Gastrocnemius medialis (tissue), 4 donors: ENCODE measurements at regions of chr20 and their contacts with region 1.

Region 1: DNA sequence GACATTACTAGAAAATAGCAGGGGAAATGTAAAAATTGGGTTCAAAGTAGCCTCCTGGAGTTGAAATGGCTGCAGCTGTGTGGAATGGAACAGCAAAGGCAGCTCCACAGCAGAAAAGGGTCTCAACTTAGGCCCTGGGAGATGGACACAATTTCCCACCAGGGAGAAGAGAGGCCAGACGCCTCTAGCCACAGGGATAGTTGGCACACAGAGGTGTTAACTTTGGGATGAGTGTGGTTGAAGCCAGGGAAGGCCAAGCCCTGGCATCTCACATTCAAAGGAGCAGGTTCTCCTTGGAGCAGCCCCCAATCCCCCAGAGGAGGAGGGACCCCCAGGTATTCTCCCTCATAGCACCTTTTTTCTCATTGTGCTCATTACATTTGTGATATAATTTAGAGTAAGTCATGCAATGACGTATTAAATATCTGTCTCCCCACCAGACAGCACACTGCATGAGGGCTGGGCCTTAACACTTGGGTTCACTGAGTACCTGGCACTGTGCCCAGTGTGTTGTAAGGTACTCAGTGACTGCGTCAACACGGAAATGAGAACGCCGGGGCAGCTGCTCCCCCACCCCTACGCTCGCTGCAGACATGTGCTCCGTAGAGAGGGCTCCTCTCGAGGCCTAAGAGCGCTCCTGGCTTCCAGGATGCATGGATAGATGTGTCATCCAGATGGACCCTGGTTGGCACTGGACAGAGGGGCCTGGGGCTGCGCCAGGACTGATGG is 76.0 kb upstream of the CD93 start:
- DNase-seq: peak; percentile 92 to 97
- ATAC-seq: peak; percentile 90 to 94
- H3K4me3 ChIP-seq: no peak overlapping the region
- H3K27ac ChIP-seq: peak overlapping the region; percentile 77 to 83 (median 78)
- H3K4me1 ChIP-seq: peaks cover 44 to 56% of the 10 kb centered on the region in 2 donors
- H3K27me3 ChIP-seq: no peaks in the 10 kb centered on the region
- CTCF ChIP-seq: no peak
- POLR2A ChIP-seq: peak in 1 of 2 donors; percentile 21

Region 2: DNA sequence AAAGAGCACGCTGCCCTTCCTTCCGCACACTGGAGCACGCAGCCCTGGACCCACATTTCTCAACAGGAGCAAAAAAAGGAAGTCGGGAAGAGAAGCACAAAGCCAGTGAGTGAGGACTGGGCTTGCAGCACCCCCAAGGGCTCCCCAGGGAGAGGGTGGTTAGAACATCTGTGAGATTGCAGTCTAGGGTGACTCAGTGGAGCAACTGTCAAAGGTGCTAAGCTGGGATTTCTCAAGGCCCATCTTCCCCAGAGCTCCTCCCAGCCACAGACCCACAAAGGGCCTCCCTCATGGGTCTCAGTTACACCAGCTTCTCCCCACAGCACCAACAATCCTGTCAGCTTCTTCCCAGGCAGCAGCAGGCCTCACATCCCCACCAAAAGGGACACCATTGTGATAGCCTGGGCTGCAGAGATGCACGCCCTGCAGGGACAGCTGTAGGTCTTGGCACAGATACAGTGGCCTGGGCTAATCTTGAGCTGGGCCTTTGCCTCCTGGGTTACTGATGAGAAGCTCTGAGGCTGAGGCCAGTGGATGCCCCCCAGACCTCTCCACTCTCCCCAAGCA is 36.4 kb before region 1 on chr20:
- in situ Hi-C with region 1: no loop called
- intact Hi-C with region 1: loop called (anchors 1 kb)
- DNase-seq: peak; percentile 61 to 80
- ATAC-seq: peak; percentile 71
- H3K4me3 ChIP-seq: no peak overlapping the region
- H3K27ac ChIP-seq: peak overlapping the region; percentile 83 to 88 (median 86)
- H3K4me1 ChIP-seq: peaks cover 19 to 31% of the 10 kb centered on the region in 2 donors
- H3K27me3 ChIP-seq: no peaks in the 10 kb centered on the region
- CTCF ChIP-seq: no peak
- POLR2A ChIP-seq: peak in 1 of 2 donors; percentile 14